Vagina (tissue), 2 donors: ENCODE measurements at regions of chr19 and their contacts with region 1.

Region 1: DNA sequence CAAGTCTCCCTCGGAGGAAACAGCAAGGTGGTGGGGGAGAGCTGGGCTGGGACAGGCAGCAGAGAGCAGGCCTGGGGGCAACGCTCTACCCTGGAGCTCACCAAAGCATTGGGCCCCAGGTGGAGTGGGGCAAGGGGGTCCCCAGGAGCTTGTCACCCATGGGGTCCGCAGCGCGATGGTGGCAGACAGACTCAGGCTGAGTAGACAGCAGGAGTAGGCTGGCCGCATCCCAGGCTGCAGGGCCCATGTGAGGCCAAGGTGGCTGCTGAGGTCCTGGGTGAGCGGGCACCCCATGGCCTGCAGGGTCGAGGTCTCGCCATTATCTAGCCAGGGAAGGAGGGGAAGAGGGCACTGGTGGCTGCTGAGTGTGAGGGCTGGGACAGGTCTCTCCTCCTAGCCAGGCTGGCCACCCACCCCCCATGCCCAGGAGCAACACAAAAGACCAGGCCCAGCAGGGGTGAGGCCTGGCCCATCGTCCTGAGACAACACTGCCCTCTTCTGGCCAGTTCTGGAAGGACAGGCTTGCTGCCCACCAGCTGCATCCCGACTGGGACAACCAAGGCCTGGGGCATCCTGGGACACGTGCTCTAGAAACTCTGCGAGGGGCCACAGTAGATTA is 33.1 kb downstream of the CEBPG start:
- DNase-seq: no peak
- H3K4me3 ChIP-seq: no peak overlapping the region
- H3K27ac ChIP-seq: no peak overlapping the region
- H3K4me1 ChIP-seq: peaks cover 14% of the 10 kb centered on the region
- H3K27me3 ChIP-seq: no peaks in the 10 kb centered on the region
- CTCF ChIP-seq: peak; percentile 95 to 98 (median 96)
- POLR2A ChIP-seq: no peak

Region 2: DNA sequence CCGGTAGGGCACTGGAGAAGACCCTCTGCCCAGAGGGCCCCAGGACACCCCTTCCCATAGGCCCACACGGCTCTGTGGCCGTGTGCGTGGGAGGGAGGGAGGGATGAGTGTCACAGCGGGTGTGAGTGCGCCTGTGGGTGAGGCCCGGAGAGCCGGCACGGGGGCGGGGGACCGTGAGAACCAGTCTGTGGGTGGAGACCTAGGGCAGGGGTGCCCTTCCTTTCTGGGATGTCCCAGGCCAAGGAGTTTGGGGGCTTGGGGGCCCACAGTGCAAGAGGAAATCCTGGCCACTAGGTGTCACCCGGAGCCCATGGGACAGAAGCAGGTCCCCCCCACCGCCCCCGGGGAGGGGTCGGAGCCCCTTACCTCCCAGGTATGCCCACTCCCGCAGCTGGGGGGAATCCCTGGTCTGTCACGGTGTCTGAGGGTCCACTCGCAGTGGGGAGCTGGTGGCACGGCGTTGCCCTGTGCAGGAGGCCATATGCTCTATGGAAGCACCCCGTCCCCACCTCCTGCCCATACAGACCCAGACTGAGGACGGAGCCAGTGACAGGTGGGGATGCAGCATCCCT is 165.0 kb before region 1 on chr19:
- intact Hi-C with region 1: loop called (anchors 2 kb)
- DNase-seq: no peak
- H3K4me3 ChIP-seq: no peak overlapping the region
- H3K27ac ChIP-seq: no peak overlapping the region
- H3K4me1 ChIP-seq: peaks cover 11% of the 10 kb centered on the region
- H3K27me3 ChIP-seq: no peaks in the 10 kb centered on the region
- CTCF ChIP-seq: peak; percentile 79 to 95 (median 86)
- POLR2A ChIP-seq: no peak